HAP-1 (cell line): ENCODE measurements at regions of chr1 and their contacts with region 1.

Region 1: GRCh38 chr1:233240829-233241682 is 54.5 kb downstream of the PCNX2 start:
- DNase-seq: peak; percentile 48 to 65
- H3K4me3 ChIP-seq: no peak overlapping the region
- H3K4me1 ChIP-seq: peaks cover 5% of the 10 kb centered on the region
- H3K27me3 ChIP-seq: no peaks in the 10 kb centered on the region

Region 2: GRCh38 chr1:231885209-231885854 is 1355.7 kb before region 1 on chr1:
- in situ Hi-C with region 1: loop called (anchors 25 kb)
- DNase-seq: no peak
- H3K4me3 ChIP-seq: no peak overlapping the region
- H3K4me1 ChIP-seq: peaks cover 6% of the 10 kb centered on the region; the same call in 1 of the 2 replicates
- H3K27me3 ChIP-seq: no peaks in the 10 kb centered on the region

Region 3: GRCh38 chr1:232630047-232630893 is 610.8 kb before region 1 on chr1 and contains the start of gene SIPA1L2:
- in situ Hi-C with region 1: loop called (anchors 10 kb)
- DNase-seq: peak; percentile 76 to 94
- H3K4me3 ChIP-seq: peak within 1 kb of the TSS; percentile 59
- H3K4me1 ChIP-seq: peaks cover 16% of the 10 kb centered on the region
- H3K27me3 ChIP-seq: no peaks in the 10 kb centered on the region

Region 4: DNA sequence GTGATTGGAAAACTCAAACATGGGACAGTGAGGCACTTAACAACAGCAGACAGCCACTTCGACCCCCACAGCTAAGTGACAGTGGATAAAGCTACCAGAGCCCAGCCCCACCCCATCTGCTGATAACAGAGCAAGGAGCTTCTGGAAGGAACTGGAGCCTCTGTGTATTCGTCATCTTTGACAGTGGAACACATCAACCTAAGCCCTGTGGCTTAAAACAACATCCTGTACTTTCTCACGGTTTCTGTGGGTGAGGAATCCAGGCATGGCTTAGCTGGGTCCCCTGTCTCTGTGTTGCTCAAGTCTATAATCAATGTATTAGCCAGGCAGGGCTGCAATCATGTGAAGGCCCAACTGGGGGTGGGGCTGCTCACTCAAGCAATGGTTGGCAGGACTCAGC is 592.7 kb before region 1 on chr1:
- in situ Hi-C with region 1: no loop called
- DNase-seq: no peak
- H3K4me3 ChIP-seq: no peak overlapping the region
- H3K4me1 ChIP-seq: no peaks in the 10 kb centered on the region
- H3K27me3 ChIP-seq: no peaks in the 10 kb centered on the region

Region 5: GRCh38 chr1:232999956-233000625 is 241.0 kb before region 1 on chr1:
- in situ Hi-C with region 1: no loop called
- DNase-seq: no peak
- H3K4me3 ChIP-seq: no peak overlapping the region
- H3K4me1 ChIP-seq: no peaks in the 10 kb centered on the region
- H3K27me3 ChIP-seq: no peaks in the 10 kb centered on the region

Region 6: DNA sequence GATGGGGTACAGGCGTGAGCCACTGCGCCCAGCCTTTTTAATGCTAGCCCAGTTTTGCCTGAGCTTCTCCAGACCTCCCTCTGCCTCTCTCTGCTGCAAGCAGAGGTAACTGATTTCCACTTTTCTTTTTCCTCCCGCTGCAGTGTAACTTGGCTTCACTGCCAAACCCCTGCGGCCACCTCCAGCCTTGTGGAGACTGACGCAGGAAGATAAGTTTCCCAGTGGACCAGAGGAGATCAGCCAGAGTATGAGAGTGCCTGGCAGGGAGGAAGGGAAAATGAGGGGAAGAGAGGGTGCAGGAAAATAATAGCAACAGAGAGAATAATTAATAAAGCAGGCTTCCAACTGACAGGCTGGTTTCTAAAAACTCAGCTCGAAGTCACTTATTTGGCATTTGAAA is 89.2 kb before region 1 on chr1:
- in situ Hi-C with region 1: no loop called
- DNase-seq: no peak
- H3K4me3 ChIP-seq: no peak overlapping the region
- H3K4me1 ChIP-seq: no peaks in the 10 kb centered on the region
- H3K27me3 ChIP-seq: no peaks in the 10 kb centered on the region

Region 7: GRCh38 chr1:234188454-234188792 is 947.4 kb after region 1 on chr1:
- in situ Hi-C with region 1: no loop called
- DNase-seq: peak; percentile 52 to 82
- H3K4me3 ChIP-seq: no peak overlapping the region
- H3K4me1 ChIP-seq: no peaks in the 10 kb centered on the region
- H3K27me3 ChIP-seq: peaks cover 2% of the 10 kb centered on the region; the same call in 1 of the 2 replicates